ENCODE measurements at regions of chr2 and their contacts with region 1.

Region 1: DNA sequence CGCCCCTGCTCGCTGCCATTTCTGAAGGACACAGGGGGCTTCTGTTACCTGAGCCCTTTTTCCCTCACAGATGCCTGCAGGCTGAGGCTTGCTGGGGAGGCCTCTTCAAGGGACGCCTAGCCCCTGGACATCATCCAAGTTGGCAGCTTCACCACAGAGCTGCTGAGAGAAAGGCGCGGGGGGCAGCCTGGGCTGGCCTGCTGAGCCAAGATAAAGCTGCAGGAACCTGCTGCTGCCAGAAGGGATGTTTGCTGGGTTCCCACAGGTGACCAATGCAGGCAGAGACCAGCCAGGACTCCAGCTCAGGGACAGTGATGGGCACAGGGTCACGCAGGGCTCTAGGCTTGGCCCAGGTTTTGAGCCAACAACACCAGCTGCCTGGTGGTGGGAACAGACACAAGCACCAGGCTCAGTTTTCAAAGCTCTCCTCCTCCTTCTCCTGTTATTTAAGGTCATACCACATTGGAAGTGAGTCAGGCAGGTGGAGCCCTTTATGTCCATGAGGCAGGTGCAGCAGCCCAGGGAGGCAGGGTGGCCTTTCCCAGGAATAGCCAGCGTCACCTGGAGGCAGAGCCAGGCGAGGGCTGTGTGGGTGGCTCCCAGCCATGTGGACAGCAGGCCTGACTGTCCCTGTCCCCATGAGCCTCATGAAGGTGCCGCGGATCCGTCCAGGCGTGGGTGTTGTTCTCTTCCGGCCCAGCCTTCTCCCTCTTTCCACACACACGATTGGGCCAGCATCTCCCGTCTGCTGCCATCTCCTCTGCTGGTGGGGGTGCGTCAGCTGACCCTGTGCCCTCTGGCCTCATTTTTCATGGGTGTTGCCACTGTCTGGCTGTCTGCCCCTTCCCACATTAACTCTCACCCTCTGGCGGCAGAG is 515.5 kb upstream of the MYT1L start:
- DNase-seq: peak in 1 of 5 donors; percentile 27
- H3K4me3 ChIP-seq: no peak overlapping the region
- H3K27ac ChIP-seq: no peak overlapping the region
- H3K4me1 ChIP-seq: no peaks in the 10 kb centered on the region
- H3K27me3 ChIP-seq: no peaks in the 10 kb centered on the region
- CTCF ChIP-seq: no peak
- EP300 ChIP-seq: no peak
- POLR2A ChIP-seq: no peak

Region 2: DNA sequence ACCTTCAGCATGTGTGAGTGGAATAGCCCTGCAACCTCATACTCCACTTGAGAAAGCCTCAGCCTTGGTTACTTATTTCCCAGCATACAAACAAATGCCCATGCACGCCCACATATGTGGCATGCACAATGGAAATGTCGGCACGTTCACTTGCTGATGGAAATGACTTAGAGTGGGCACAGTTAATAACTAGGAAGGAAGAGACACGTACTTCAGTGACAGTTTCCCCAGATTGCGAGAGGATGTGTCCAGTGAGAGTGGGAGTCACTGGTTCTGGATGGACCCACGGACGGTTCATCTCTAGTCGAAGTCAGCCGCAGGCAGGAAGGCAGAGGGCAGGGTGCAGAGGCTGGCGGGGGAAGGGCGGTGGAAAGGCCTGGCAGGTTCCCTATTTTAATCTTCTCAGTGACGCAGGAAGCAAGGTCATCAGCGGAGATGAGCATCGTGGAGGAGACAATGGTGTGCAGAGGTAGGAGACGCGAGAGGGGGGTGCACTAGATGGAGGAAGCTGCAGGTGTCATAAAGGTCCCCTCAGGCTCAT is 164.8 kb before region 1 on chr2:
- intact Hi-C with region 1: no loop called
- DNase-seq: no peak
- H3K4me3 ChIP-seq: no peak overlapping the region
- H3K27ac ChIP-seq: no peak overlapping the region
- H3K4me1 ChIP-seq: no peaks in the 10 kb centered on the region
- H3K27me3 ChIP-seq: no peaks in the 10 kb centered on the region
- CTCF ChIP-seq: no peak
- EP300 ChIP-seq: no peak
- POLR2A ChIP-seq: no peak

Region 3: GRCh38 chr2:2707206-2707991 is 139.2 kb before region 1 on chr2:
- intact Hi-C with region 1: loop called in 1 of 4 experiments (anchors 10 kb)
- DNase-seq: no peak
- H3K4me3 ChIP-seq: no peak overlapping the region
- H3K27ac ChIP-seq: no peak overlapping the region
- H3K4me1 ChIP-seq: peaks cover 2% of the 10 kb centered on the region
- H3K27me3 ChIP-seq: no peaks in the 10 kb centered on the region
- CTCF ChIP-seq: no peak
- EP300 ChIP-seq: no peak
- POLR2A ChIP-seq: no peak

Region 4: GRCh38 chr2:2856723-2857415 is 10.3 kb after region 1 on chr2:
- intact Hi-C with region 1: no loop called
- DNase-seq: no peak
- H3K4me3 ChIP-seq: no peak overlapping the region
- H3K27ac ChIP-seq: no peak overlapping the region
- H3K4me1 ChIP-seq: no peaks in the 10 kb centered on the region
- H3K27me3 ChIP-seq: no peaks in the 10 kb centered on the region
- CTCF ChIP-seq: no peak
- EP300 ChIP-seq: no peak
- POLR2A ChIP-seq: no peak

Region 5: GRCh38 chr2:2901384-2902345 is 55.1 kb after region 1 on chr2:
- intact Hi-C with region 1: no loop called
- DNase-seq: no peak
- H3K4me3 ChIP-seq: no peak overlapping the region
- H3K27ac ChIP-seq: no peak overlapping the region
- H3K4me1 ChIP-seq: no peaks in the 10 kb centered on the region
- H3K27me3 ChIP-seq: no peaks in the 10 kb centered on the region
- CTCF ChIP-seq: no peak
- EP300 ChIP-seq: no peak
- POLR2A ChIP-seq: no peak

Region 6: GRCh38 chr2:4047961-4048891 is 1201.7 kb after region 1 on chr2:
- intact Hi-C with region 1: no loop called
- DNase-seq: no peak
- H3K4me3 ChIP-seq: no peak overlapping the region
- H3K27ac ChIP-seq: no peak overlapping the region
- H3K4me1 ChIP-seq: no peaks in the 10 kb centered on the region
- H3K27me3 ChIP-seq: no peaks in the 10 kb centered on the region
- CTCF ChIP-seq: no peak
- EP300 ChIP-seq: no peak
- POLR2A ChIP-seq: no peak

Measured in ovary (tissue), 10 donors.